Activated CD8-positive, alpha-beta memory T cell treated with anti-CD3 and anti-CD28 coated beads, Interleukin-2, amount 10 ng/mL, durations not matched to agents 7 days and 5 days (primary cell): ENCODE measurements at regions of chr14 and their contacts with region 1.

Region 1: DNA sequence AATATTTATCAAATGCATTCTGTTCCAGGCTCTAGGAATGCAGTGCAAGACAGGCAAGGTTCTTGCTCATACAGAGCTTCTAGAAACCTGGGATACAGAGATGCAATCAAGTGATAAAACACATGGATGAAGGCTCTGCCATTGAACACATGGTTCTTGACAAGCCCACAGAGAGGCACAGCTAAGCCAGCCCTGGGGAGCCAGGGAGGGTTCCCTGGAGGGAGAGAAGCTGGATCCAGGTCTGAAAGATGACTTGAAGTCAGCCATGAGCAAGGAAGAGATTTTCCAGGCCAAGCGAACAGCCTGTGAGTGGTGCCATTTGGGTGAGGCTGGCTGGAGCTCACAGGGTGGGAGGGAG is 66.2 kb downstream of the IRF2BPL start:
- DNase-seq: peak; percentile 48
- ATAC-seq: peak; percentile 11
- H3K4me3 Mint-ChIP-seq: peak overlapping the region; percentile 42
- H3K27ac Mint-ChIP-seq: peak overlapping the region; percentile 95
- H3K4me1 Mint-ChIP-seq: peaks cover 74% of the 10 kb centered on the region
- H3K27me3 Mint-ChIP-seq: peaks cover 46% of the 10 kb centered on the region

Region 2: GRCh38 chr14:76977793-76978720 is 15.8 kb after region 1 on chr14:
- CTCF ChIA-PET with region 1: interaction called, 13 read pairs
- DNase-seq: peak; percentile 85
- ATAC-seq: peak; percentile 94
- H3K4me3 Mint-ChIP-seq: no peak overlapping the region
- H3K27ac Mint-ChIP-seq: peak overlapping the region; percentile 77
- H3K4me1 Mint-ChIP-seq: peaks cover 15% of the 10 kb centered on the region
- H3K27me3 Mint-ChIP-seq: peaks cover 4% of the 10 kb centered on the region

Region 3: GRCh38 chr14:76993752-76994151 is 31.5 kb after region 1 on chr14:
- CTCF ChIA-PET with region 1: no interaction called
- DNase-seq: no peak
- ATAC-seq: no peak
- H3K4me3 Mint-ChIP-seq: no peak overlapping the region
- H3K27ac Mint-ChIP-seq: no peak overlapping the region
- H3K4me1 Mint-ChIP-seq: peaks cover 2% of the 10 kb centered on the region
- H3K27me3 Mint-ChIP-seq: peaks cover 7% of the 10 kb centered on the region

Region 4: GRCh38 chr14:77023001-77023996 is 61.0 kb after region 1 on chr14:
- CTCF ChIA-PET with region 1: interaction called, 18 read pairs
- DNase-seq: no peak
- ATAC-seq: no peak
- H3K4me3 Mint-ChIP-seq: peak overlapping the region; percentile 15
- H3K27ac Mint-ChIP-seq: peak overlapping the region; percentile 54
- H3K4me1 Mint-ChIP-seq: peaks cover 47% of the 10 kb centered on the region
- H3K27me3 Mint-ChIP-seq: no peaks in the 10 kb centered on the region

Region 5: DNA sequence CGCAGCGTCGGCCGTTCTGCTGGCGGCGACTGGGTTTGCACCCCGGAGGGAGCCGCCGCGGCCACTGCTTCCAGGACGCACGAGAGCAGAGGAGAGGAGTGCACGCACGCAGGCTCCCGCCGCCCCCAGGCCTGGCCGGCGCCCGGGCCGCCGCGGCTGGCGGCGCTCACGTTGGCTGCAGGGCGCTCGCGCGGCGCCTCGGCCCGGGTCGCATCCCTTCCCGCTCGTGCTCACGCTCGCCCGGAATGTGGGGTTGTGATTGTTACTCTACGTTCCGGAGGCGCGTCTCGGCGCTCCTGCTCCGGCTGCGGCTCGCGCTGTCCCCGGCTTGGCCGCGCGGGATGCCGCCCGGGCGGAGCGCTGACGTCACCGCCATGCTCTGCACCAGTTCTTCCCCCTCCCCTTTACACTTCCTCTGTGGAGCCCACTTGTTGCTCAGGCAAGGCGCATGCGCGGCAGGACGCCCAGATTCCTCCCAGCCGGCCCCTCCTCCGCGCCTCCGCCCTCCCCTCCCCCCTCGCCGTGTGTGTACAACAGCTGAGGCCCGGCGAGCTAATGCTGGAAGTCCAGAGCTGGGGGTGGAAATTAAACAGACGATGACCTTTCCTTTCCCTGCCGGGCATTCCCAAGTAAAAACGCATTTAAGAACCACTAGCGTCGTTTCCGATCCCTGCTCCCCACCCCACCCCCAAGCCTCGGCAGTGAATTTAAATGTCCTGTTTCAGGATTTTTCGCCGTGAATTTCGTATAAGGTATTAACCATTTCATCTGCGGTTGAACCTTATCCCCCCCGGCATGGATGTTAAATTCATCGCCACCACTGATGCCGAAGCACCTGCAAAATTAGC is 66.3 kb after region 1 on chr14 and contains the start of gene IRF2BPL:
- CTCF ChIA-PET with region 1: interaction called, 18 read pairs
- DNase-seq: peak; percentile 97
- ATAC-seq: peak; percentile 78
- H3K4me3 Mint-ChIP-seq: peak within 1 kb of the TSS; percentile 89
- H3K27ac Mint-ChIP-seq: peak within 1 kb of the TSS; percentile 93
- H3K4me1 Mint-ChIP-seq: peaks cover 57% of the 10 kb centered on the region
- H3K27me3 Mint-ChIP-seq: no peaks in the 10 kb centered on the region
- total RNA-seq, gene IRF2BPL: 19.7 to 24.9 TPM